ENCODE measurements at regions of chr5 and their contacts with region 1.

Region 1: GRCh38 chr5:73519531-73520283 is 21.5 kb downstream of the BTF3 start:
- DNase-seq: peak; percentile 86
- ATAC-seq: peak; percentile 99
- H3K4me3 Mint-ChIP-seq: peak overlapping the region; percentile 62
- H3K27ac Mint-ChIP-seq: peak overlapping the region; percentile 38
- H3K4me1 Mint-ChIP-seq: peaks cover 9% of the 10 kb centered on the region
- H3K27me3 Mint-ChIP-seq: no peaks in the 10 kb centered on the region

Region 2: DNA sequence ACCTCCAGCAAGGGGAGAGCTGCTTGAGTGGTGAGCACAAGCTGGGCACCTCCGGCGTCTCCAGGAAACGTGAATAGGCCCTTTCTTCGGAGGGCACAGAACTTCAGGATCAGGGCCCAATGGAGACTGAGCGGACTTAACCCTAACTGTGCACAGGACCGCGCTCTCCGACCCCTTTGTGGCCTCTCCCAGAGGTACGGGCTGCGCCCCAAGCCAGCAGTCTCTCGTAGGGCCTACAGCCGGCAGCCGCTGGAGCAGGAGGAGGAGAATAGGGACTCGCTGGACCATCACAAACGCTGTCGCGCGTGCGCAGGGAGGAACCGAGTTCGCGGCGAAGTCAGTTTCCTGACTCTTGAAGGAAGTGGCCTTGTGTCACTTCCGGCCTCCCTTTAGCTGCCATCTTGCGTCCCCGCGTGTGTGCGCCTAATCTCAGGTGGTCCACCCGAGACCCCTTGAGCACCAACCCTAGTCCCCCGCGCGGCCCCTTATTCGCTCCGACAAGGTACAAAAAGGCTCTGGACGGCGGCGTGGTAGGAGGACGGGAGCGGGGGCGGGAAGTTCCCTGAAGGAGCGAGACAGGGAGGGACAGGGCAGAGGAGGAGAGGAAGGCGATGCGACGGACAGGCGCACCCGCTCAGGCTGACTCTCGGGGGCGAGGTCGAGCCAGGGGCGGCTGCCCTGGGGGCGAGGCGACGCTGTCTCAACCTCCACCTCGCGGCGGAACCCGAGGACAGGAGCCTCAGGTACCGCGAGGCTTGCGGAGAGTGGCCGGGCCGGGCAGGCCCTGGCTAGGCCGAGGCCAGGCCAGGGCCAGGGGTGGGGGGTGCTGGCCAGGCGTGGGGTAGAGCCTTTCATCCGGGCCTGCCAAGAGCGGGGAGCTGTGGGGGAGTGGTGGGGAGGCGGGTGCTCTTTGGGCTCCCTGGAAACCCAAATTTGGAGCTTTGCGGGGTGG is 21.4 kb before region 1 on chr5 and contains the start of gene BTF3:
- CTCF ChIA-PET with region 1: interaction called, 33 read pairs
- DNase-seq: peak; percentile 97
- ATAC-seq: peak; percentile 97
- H3K4me3 Mint-ChIP-seq: peak within 1 kb of the TSS; percentile 95
- H3K27ac Mint-ChIP-seq: peak within 1 kb of the TSS; percentile 98
- H3K4me1 Mint-ChIP-seq: peaks cover 38% of the 10 kb centered on the region
- H3K27me3 Mint-ChIP-seq: peaks cover 7% of the 10 kb centered on the region
- total RNA-seq, gene BTF3: 601 to 785 TPM

Region 3: DNA sequence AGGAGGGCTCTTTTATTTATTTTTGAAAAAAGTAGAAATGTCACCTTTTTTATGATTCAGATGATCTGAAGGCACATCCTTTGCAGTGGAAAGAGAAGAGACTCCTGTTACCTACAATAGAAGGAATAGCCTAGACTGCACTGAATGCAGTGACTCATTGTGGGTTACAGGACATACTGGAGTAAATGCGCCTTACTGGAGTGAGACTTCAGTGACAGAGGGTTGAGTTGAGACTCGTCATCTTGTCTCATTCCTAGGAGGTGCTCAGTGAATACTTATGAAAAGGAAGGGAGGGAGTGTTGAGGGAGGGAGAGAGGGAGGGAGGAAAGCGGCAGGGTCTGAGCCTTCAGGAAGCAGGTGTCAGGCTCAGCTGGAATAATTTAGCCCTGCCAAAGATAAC is 20.5 kb after region 1 on chr5:
- CTCF ChIA-PET with region 1: interaction called, 67 read pairs
- DNase-seq: no peak
- ATAC-seq: no peak
- H3K4me3 Mint-ChIP-seq: no peak overlapping the region
- H3K27ac Mint-ChIP-seq: no peak overlapping the region
- H3K4me1 Mint-ChIP-seq: peaks cover 13% of the 10 kb centered on the region
- H3K27me3 Mint-ChIP-seq: peaks cover 31% of the 10 kb centered on the region

Region 4: DNA sequence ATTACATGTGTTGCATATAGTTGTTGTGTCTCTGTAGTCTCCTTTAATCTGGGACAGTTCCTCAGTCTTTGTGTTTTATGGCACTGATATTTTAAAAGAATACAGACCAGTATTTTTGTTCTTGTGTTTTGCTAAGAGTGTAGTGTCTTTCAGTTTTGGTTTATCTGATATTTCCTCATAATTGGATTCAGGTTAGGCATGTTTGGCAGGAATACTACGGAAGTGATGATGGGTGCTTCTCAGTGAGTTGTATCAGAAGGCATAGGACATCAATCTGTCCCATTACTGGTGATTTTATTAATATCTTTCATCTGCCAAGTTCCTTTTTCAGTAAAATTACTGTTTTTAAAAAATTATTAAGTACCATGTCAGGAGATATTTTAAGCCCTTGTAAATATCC is 319.2 kb after region 1 on chr5:
- CTCF ChIA-PET with region 1: no interaction called
- DNase-seq: no peak
- ATAC-seq: no peak
- H3K4me3 Mint-ChIP-seq: no peak overlapping the region
- H3K27ac Mint-ChIP-seq: no peak overlapping the region
- H3K4me1 Mint-ChIP-seq: no peaks in the 10 kb centered on the region
- H3K27me3 Mint-ChIP-seq: peaks cover 18% of the 10 kb centered on the region